GM12878 (cell line): ENCODE measurements at regions of chr4 and their contacts with region 1.

Region 1: DNA sequence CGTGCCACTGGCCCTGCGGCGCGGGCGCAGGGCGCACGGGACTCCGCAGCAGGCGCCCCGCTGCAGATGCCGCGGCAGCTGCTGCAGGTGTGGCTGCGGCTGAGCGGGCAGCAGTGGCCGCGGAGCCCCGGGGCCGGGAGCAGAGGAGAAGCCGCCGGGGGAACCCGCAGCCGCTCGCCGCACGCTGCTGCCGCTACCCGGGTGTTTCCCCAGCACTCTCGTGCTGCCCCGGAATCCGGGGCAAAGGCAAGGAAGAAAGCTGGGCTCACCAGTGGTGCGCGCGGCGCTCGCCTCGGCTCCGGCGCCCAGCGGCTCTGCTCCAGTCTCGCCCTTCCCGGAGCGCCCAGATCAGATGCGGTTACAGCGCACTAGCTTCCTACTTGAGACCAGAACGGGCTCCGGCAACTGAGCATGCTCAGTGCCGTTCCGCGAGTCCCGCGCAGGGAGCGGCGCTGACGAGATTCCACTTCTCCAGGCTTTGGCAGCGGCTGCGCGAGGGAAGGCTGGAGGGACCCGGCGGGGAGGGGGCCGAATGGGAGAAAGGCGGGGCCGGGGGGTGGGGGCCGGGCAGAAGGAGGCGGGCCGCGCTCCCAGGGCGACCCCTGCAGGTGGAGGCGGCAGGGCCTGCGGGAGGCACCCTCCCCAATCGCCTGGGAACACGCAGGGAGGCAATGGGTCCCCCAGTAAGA is at the start of gene APBB2:
- DNase-seq: peak; percentile 49
- ATAC-seq: peak; percentile 78
- H3K4me3 ChIP-seq: peak within 1 kb of the TSS; percentile 83
- H3K27ac ChIP-seq: peak within 1 kb of the TSS; percentile 71; the same call in 1 of the 2 replicates
- H3K4me1 ChIP-seq: no peaks in the 10 kb centered on the region; the same call in 1 of the 2 replicates
- H3K27me3 ChIP-seq: no peaks in the 10 kb centered on the region
- CTCF ChIP-seq: peak; percentile 56 to 86 (median 77)
- EP300 ChIP-seq: no peak
- POLR2A ChIP-seq: peak; percentile 79
- RAD21 ChIP-seq: peak; percentile 65
- polyA plus RNA-seq, gene APBB2: 2.7 to 3.1 TPM

Region 2: GRCh38 chr4:40763228-40763716 is 451.0 kb before region 1 on chr4:
- CTCF ChIA-PET with region 1: no interaction called
- POLR2A ChIA-PET with region 1: no interaction called
- RAD21 ChIA-PET with region 1: no interaction called
- SMC1A ChIA-PET with region 1: no interaction called
- in situ Hi-C with region 1: no loop called
- intact Hi-C with region 1: no loop called
- DNase-seq: peak; percentile 88
- ATAC-seq: peak; percentile 100
- H3K4me3 ChIP-seq: no peak overlapping the region
- H3K27ac ChIP-seq: 0 out of 2 replicates have a peak overlapping the region, but pooled peaks have one; percentile 20
- H3K4me1 ChIP-seq: peaks cover 14% of the 10 kb centered on the region
- H3K27me3 ChIP-seq: no peaks in the 10 kb centered on the region
- CTCF ChIP-seq: no peak
- EP300 ChIP-seq: peak in 1 of 2 experiments; percentile 82; a peak in 3 of 4 replicates
- POLR2A ChIP-seq: no peak
- RAD21 ChIP-seq: no peak

Region 3: GRCh38 chr4:40924096-40924792 is 290.0 kb before region 1 on chr4:
- CTCF ChIA-PET with region 1: interaction called, 78 read pairs
- POLR2A ChIA-PET with region 1: no interaction called
- RAD21 ChIA-PET with region 1: interaction called, 13 read pairs
- SMC1A ChIA-PET with region 1: interaction called, 20 read pairs
- in situ Hi-C with region 1: loop called (anchors 5 kb)
- intact Hi-C with region 1: loop called (anchors 1 kb)
- DNase-seq: peak; percentile 12
- ATAC-seq: peak; percentile 94
- H3K4me3 ChIP-seq: no peak overlapping the region
- H3K27ac ChIP-seq: no peak overlapping the region; the same call in 1 of the 2 replicates
- H3K4me1 ChIP-seq: no peaks in the 10 kb centered on the region
- H3K27me3 ChIP-seq: no peaks in the 10 kb centered on the region
- CTCF ChIP-seq: peak; percentile 76 to 95 (median 90)
- EP300 ChIP-seq: no peak
- POLR2A ChIP-seq: no peak
- RAD21 ChIP-seq: peak; percentile 57

Region 4: GRCh38 chr4:40992472-40993295 is 221.6 kb before region 1 on chr4:
- CTCF ChIA-PET with region 1: interaction called, 567 read pairs
- POLR2A ChIA-PET with region 1: interaction called, 4 read pairs
- RAD21 ChIA-PET with region 1: interaction called, 12 read pairs
- SMC1A ChIA-PET with region 1: interaction called, 17 read pairs
- in situ Hi-C with region 1: no loop called
- intact Hi-C with region 1: no loop called
- DNase-seq: peak; percentile 78
- ATAC-seq: peak; percentile 85
- H3K4me3 ChIP-seq: peak overlapping the region; percentile 8
- H3K27ac ChIP-seq: peak overlapping the region; percentile 98
- H3K4me1 ChIP-seq: peaks cover 38% of the 10 kb centered on the region
- H3K27me3 ChIP-seq: no peaks in the 10 kb centered on the region
- CTCF ChIP-seq: no peak
- EP300 ChIP-seq: peak in 1 of 2 experiments; percentile 39; a peak in 1 of 4 replicates
- POLR2A ChIP-seq: peak; percentile 71
- RAD21 ChIP-seq: no peak

Region 5: DNA sequence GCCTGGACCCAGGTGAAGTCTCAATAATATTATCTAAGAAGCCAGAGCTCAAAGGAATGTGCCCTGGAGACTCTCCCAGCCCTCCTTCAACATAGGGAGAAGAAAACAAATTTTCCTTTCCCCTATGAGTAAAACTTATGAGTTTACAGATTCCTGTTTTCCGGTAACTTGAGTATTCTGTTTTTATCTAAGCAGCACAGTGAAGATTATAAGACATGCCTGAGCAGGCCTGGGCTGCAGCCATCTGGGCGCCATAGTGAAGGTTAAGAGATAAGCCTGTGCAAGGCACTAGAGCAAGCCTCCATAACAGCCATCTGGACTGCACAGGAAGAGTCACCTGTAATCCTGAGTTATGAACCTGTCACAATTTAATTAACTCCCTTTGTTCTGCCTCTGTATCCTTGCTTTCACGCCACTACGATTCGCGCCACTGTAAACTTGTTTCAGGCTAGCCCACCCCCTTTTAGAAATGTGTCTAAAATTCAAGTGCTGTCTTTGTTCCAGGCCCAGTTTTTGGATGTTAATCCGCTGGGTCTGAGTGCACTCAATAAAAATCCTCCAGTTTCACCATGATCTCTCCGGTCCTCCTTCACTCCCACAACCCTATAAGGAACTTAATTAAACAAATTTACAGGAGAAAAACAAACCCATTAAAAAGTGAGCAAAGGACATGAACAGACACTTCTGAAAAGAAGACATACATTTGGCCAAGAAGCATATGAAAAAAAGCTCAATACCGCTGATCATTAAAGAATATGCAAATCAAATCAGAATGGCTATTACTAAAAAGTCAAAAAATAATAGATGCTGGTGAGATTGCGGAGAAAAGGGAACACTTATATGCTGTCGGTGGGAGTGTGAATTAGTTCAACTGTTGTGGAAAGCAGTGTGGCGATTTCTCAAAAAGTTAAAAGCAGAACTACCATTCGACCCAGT is 189.5 kb before region 1 on chr4:
- CTCF ChIA-PET with region 1: interaction called, 4 read pairs
- POLR2A ChIA-PET with region 1: interaction called, 4 read pairs
- RAD21 ChIA-PET with region 1: interaction called, 10 read pairs
- SMC1A ChIA-PET with region 1: interaction called, 3 read pairs
- in situ Hi-C with region 1: no loop called
- intact Hi-C with region 1: no loop called
- DNase-seq: no peak
- ATAC-seq: no peak
- H3K4me3 ChIP-seq: no peak overlapping the region
- H3K27ac ChIP-seq: no peak overlapping the region
- H3K4me1 ChIP-seq: no peaks in the 10 kb centered on the region
- H3K27me3 ChIP-seq: no peaks in the 10 kb centered on the region
- CTCF ChIP-seq: no peak
- EP300 ChIP-seq: no peak
- POLR2A ChIP-seq: no peak
- RAD21 ChIP-seq: no peak

Region 6: DNA sequence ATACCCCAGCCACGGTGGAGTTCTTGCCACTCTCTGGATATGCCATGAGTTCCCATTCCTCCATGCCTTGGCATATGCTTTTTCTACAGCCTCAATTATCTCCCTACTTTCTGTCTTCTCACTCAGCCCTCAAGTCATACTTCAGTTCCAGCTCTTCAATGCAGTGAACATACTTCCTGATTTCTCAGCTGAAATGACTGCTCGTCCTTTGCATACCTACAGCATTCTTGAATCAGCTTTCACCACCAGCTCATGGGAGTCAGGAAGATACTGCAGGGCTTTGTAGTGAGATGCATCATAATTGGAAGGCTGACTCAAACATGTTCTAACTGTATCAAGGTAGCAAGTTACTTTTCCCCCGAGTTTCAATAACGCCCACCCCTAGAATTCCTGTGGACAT is 118.3 kb before region 1 on chr4:
- CTCF ChIA-PET with region 1: interaction called, 3 read pairs
- POLR2A ChIA-PET with region 1: no interaction called
- RAD21 ChIA-PET with region 1: interaction called, 5 read pairs
- SMC1A ChIA-PET with region 1: interaction called, 3 read pairs
- in situ Hi-C with region 1: no loop called
- intact Hi-C with region 1: loop called (anchors 2 kb)
- DNase-seq: peak; percentile 54
- ATAC-seq: peak; percentile 60
- H3K4me3 ChIP-seq: no peak overlapping the region
- H3K27ac ChIP-seq: peak overlapping the region; percentile 23; the same call in 1 of the 2 replicates
- H3K4me1 ChIP-seq: peaks cover 6% of the 10 kb centered on the region; the same call in 1 of the 2 replicates
- H3K27me3 ChIP-seq: no peaks in the 10 kb centered on the region
- CTCF ChIP-seq: no peak
- EP300 ChIP-seq: no peak
- POLR2A ChIP-seq: no peak
- RAD21 ChIP-seq: no peak

Region 7: DNA sequence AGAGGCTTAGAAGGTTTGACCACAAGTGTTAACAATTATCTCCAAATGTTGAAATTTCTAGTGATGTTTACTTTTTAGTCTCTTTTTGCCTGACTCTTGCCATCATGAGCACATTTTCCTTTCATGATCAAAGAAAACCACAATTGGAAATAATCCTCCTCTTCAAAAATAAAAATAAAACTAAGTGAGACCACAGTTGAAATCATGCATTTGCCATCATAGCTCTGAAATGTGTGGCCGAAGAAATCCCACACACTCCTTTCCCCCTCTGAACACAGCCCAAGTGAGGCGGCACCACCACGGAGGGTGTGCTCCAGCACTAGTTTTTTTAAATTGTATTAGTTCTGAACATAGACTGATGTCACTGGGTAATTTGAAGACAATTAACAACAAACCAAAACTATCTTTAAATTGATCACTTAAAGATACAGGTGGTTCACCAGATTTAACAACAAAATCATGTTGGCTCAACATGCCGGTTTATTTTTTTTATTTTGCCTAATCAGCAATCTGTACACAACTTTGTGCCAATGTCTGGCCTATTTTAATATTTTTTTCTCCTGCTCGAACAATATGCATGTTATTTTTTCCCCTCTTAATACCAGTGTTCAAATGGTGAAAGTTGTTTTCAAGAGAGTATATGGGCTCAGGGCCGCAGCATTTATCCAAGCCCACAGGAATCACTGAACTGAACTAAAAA is 17.5 kb before region 1 on chr4:
- CTCF ChIA-PET with region 1: interaction called, 30 read pairs
- POLR2A ChIA-PET with region 1: interaction called, 4 read pairs
- RAD21 ChIA-PET with region 1: interaction called, 8 read pairs
- SMC1A ChIA-PET with region 1: interaction called, 22 read pairs
- in situ Hi-C with region 1: no loop called
- intact Hi-C with region 1: no loop called
- DNase-seq: no peak
- ATAC-seq: no peak
- H3K4me3 ChIP-seq: no peak overlapping the region
- H3K27ac ChIP-seq: no peak overlapping the region
- H3K4me1 ChIP-seq: peaks cover 22% of the 10 kb centered on the region
- H3K27me3 ChIP-seq: no peaks in the 10 kb centered on the region
- CTCF ChIP-seq: no peak
- EP300 ChIP-seq: no peak
- POLR2A ChIP-seq: no peak
- RAD21 ChIP-seq: no peak

Region 8: GRCh38 chr4:41287050-41287449 is 72.8 kb after region 1 on chr4:
- CTCF ChIA-PET with region 1: no interaction called
- POLR2A ChIA-PET with region 1: no interaction called
- RAD21 ChIA-PET with region 1: no interaction called
- SMC1A ChIA-PET with region 1: no interaction called
- in situ Hi-C with region 1: no loop called
- intact Hi-C with region 1: no loop called
- DNase-seq: no peak
- ATAC-seq: no peak
- H3K4me3 ChIP-seq: no peak overlapping the region
- H3K27ac ChIP-seq: no peak overlapping the region
- H3K4me1 ChIP-seq: no peaks in the 10 kb centered on the region
- H3K27me3 ChIP-seq: no peaks in the 10 kb centered on the region
- CTCF ChIP-seq: no peak
- EP300 ChIP-seq: no peak
- POLR2A ChIP-seq: no peak
- RAD21 ChIP-seq: no peak